ENCODE measurements at regions of chr2 and their contacts with region 1.

Region 1: GRCh38 chr2:120312861-120313694 is 32.9 kb upstream of the INHBB start:
- DNase-seq: peak; percentile 60 to 84 (median 68)
- ATAC-seq: peak; percentile 78
- H3K4me3 ChIP-seq: peak overlapping the region; percentile 52
- H3K4me3 Mint-ChIP-seq: peak overlapping the region; percentile 74
- H3K27ac ChIP-seq: no peak overlapping the region
- H3K27ac Mint-ChIP-seq: peak overlapping the region; percentile 66
- H3K4me1 ChIP-seq: peaks cover 26% of the 10 kb centered on the region
- H3K4me1 Mint-ChIP-seq: peaks cover 29% of the 10 kb centered on the region
- H3K27me3 ChIP-seq: no peaks in the 10 kb centered on the region
- H3K27me3 Mint-ChIP-seq: no peaks in the 10 kb centered on the region
- CTCF ChIP-seq: peak; percentile 90

Region 2: GRCh38 chr2:119592444-119592843 is 720.6 kb before region 1 on chr2:
- CTCF ChIA-PET with region 1: no interaction called
- POLR2A ChIA-PET with region 1: no interaction called
- intact Hi-C with region 1: no loop called
- DNase-seq: no peak
- ATAC-seq: no peak
- H3K4me3 ChIP-seq: no peak overlapping the region
- H3K4me3 Mint-ChIP-seq: no peak overlapping the region
- H3K27ac ChIP-seq: no peak overlapping the region
- H3K27ac Mint-ChIP-seq: no peak overlapping the region
- H3K4me1 ChIP-seq: no peaks in the 10 kb centered on the region
- H3K4me1 Mint-ChIP-seq: no peaks in the 10 kb centered on the region
- H3K27me3 ChIP-seq: peaks cover 0 to 2% of the 10 kb centered on the region in 2 experiments
- H3K27me3 Mint-ChIP-seq: peaks cover 17% of the 10 kb centered on the region
- CTCF ChIP-seq: no peak

Region 3: GRCh38 chr2:119641562-119642258 is 671.4 kb before region 1 on chr2:
- CTCF ChIA-PET with region 1: interaction called, 4 read pairs
- POLR2A ChIA-PET with region 1: no interaction called
- intact Hi-C with region 1: loop called (anchors 1 to 10 kb)
- DNase-seq: peak; percentile 46 to 84 (median 64)
- ATAC-seq: peak; percentile 94
- H3K4me3 ChIP-seq: no peak overlapping the region
- H3K4me3 Mint-ChIP-seq: no peak overlapping the region
- H3K27ac ChIP-seq: no peak overlapping the region
- H3K27ac Mint-ChIP-seq: no peak overlapping the region
- H3K4me1 ChIP-seq: peaks cover 4% of the 10 kb centered on the region
- H3K4me1 Mint-ChIP-seq: peaks cover 5% of the 10 kb centered on the region
- H3K27me3 ChIP-seq: no peaks in the 10 kb centered on the region
- H3K27me3 Mint-ChIP-seq: peaks cover 5% of the 10 kb centered on the region
- CTCF ChIP-seq: peak; percentile 96

Region 4: GRCh38 chr2:119702918-119703401 is 610.1 kb before region 1 on chr2:
- CTCF ChIA-PET with region 1: interaction called, 5 read pairs
- POLR2A ChIA-PET with region 1: interaction called, 5 read pairs
- intact Hi-C with region 1: loop called (anchors 1 to 5 kb)
- DNase-seq: peak; percentile 28 to 82 (median 54)
- ATAC-seq: peak; percentile 71
- H3K4me3 ChIP-seq: no peak overlapping the region
- H3K4me3 Mint-ChIP-seq: no peak overlapping the region
- H3K27ac ChIP-seq: no peak overlapping the region
- H3K27ac Mint-ChIP-seq: no peak overlapping the region
- H3K4me1 ChIP-seq: peaks cover 26% of the 10 kb centered on the region
- H3K4me1 Mint-ChIP-seq: peaks cover 6% of the 10 kb centered on the region
- H3K27me3 ChIP-seq: no peaks in the 10 kb centered on the region
- H3K27me3 Mint-ChIP-seq: no peaks in the 10 kb centered on the region
- CTCF ChIP-seq: peak; percentile 98

Region 5: DNA sequence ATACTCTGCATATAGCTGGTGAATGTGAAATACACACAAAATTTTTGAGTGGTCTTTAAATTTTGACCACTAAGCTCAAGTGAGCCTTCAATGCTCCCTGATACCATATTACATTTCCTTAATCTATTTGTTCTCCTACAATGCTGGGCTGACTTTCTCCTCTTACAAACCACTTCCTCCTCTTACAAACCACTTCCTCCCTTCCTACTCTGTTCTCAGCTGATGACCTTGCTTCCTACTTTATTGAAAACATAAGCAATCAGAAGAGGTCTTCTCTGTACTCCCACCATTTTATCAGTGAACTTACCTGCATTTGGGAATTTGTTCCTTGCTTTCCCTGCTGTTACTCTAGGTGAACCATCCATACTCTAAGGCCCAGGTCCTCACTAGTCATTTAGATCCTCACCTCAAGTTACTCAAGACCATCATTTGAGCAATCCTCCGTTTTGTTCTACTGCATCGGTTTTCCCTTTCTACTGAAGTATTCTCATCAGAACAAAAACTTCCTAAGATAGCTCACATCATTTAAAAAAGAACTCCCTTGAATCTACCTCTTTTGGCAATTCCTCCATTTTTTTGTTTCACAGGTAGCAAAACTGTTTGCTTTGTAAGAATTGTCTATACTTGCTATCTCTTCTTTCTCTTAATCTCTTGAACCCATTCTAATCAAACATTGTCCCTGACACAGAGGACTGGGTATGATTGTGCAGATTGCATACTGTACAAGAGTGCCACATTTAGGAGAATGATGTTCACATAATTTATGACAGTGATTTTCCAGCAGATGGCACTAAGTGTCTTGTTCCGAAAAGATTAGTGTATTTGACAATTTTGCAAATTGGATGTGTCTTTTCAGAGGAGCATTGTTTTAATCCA is 203.7 kb before region 1 on chr2:
- CTCF ChIA-PET with region 1: interaction called, 9 read pairs
- POLR2A ChIA-PET with region 1: interaction called, 12 read pairs
- intact Hi-C with region 1: loop called (anchors 1 to 2 kb)
- DNase-seq: peak in 4 of 14 experiments; percentile 3 to 83 (median 55)
- ATAC-seq: peak; percentile 83
- H3K4me3 ChIP-seq: peak overlapping the region; percentile 5
- H3K4me3 Mint-ChIP-seq: peak overlapping the region; percentile 44
- H3K27ac ChIP-seq: no peak overlapping the region
- H3K27ac Mint-ChIP-seq: peak overlapping the region; percentile 2
- H3K4me1 ChIP-seq: no peaks in the 10 kb centered on the region
- H3K4me1 Mint-ChIP-seq: peaks cover 39% of the 10 kb centered on the region
- H3K27me3 ChIP-seq: no peaks in the 10 kb centered on the region
- H3K27me3 Mint-ChIP-seq: no peaks in the 10 kb centered on the region
- CTCF ChIP-seq: peak; percentile 83

Region 6: DNA sequence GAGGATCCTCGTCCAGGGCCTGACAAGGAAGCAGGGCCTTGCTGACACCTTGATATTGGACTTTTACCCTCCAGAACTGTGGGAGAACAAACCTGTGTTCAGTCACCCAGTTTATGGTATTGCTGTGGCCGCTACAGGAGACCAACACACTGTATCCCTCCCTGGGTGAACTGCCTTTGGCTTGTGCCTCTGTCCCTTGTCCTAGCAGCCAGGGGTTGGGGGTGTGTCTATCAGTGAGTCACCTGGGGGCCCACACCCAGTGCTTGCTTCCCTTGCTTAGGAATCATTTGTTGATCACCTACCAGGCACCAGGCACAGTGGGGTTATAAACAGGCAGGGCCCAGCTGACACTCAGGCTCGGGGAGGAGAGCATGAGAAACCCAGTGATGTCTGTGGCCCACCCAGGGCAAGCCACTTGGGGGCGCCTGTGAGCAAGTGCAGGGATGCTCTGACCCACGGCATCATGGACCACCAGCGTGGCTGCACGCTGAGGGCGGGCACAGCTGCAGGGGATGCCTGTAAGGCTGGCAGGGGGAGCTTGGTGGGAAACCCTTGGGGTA is 107.0 kb before region 1 on chr2:
- CTCF ChIA-PET with region 1: no interaction called
- POLR2A ChIA-PET with region 1: no interaction called
- intact Hi-C with region 1: loop called in 1 of 2 experiments (anchors 5 kb)
- DNase-seq: peak in 5 of 14 experiments; percentile 22 to 58 (median 38)
- ATAC-seq: no peak
- H3K4me3 ChIP-seq: no peak overlapping the region
- H3K4me3 Mint-ChIP-seq: no peak overlapping the region
- H3K27ac ChIP-seq: no peak overlapping the region
- H3K27ac Mint-ChIP-seq: no peak overlapping the region
- H3K4me1 ChIP-seq: peaks cover 16% of the 10 kb centered on the region
- H3K4me1 Mint-ChIP-seq: no peaks in the 10 kb centered on the region
- H3K27me3 ChIP-seq: no peaks in the 10 kb centered on the region
- H3K27me3 Mint-ChIP-seq: no peaks in the 10 kb centered on the region
- CTCF ChIP-seq: peak; percentile 19

Region 7: GRCh38 chr2:120231974-120232635 is 81.0 kb before region 1 on chr2:
- CTCF ChIA-PET with region 1: interaction called, 4 read pairs
- POLR2A ChIA-PET with region 1: interaction called, 11 read pairs
- intact Hi-C with region 1: loop called (anchors 2 to 5 kb)
- DNase-seq: peak; percentile 32 to 91 (median 54)
- ATAC-seq: peak; percentile 90
- H3K4me3 ChIP-seq: peak overlapping the region; percentile 70
- H3K4me3 Mint-ChIP-seq: peak overlapping the region; percentile 95
- H3K27ac ChIP-seq: peak overlapping the region; percentile 66 to 80
- H3K27ac Mint-ChIP-seq: peak overlapping the region; percentile 95
- H3K4me1 ChIP-seq: peaks cover 45% of the 10 kb centered on the region
- H3K4me1 Mint-ChIP-seq: peaks cover 62% of the 10 kb centered on the region
- H3K27me3 ChIP-seq: no peaks in the 10 kb centered on the region
- H3K27me3 Mint-ChIP-seq: no peaks in the 10 kb centered on the region
- CTCF ChIP-seq: no peak